ENCODE measurements at regions of chr9 and their contacts with region 1.

Region 1: GRCh38 chr9:99807276-99807852 is 14.3 kb upstream of the NR4A3 start:
- DNase-seq: peak; percentile 70
- H3K4me3 ChIP-seq: no peak overlapping the region
- H3K27ac ChIP-seq: no peak overlapping the region
- H3K4me1 ChIP-seq: no peaks in the 10 kb centered on the region
- CTCF ChIP-seq: peak; percentile 95

Region 2: DNA sequence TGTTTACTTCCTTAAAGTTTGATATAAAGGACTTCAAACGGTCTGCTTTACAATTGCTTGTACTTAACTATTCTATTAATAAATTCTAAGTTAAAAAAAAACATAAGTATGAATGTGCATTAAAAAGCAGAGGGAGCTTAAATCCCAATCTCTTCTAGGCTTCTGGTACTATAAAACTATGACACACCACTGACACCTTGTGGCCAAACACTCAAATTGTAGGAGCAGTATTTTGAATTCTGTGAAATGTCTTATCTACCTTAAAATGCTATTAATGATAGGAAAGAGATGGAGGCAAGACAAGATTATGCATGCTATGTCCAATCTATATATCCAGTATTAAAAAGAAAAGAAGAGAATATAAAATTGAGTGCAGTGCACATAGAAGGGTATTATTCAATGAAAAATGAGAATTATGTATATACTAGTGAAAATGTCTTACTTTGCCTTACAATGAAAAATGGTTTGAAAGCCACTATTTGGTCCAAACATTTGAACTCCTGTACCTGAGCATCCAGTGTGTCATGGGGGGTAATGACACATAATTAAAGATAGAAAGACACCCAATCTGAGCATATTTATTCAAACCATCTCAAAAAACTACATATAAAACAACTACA is 203.8 kb after region 1 on chr9:
- CTCF ChIA-PET with region 1: no interaction called
- POLR2A ChIA-PET with region 1: no interaction called
- intact Hi-C with region 1: loop called (anchors 5 kb)
- DNase-seq: peak; percentile 61
- H3K4me3 ChIP-seq: no peak overlapping the region
- H3K27ac ChIP-seq: no peak overlapping the region
- H3K4me1 ChIP-seq: no peaks in the 10 kb centered on the region
- CTCF ChIP-seq: peak; percentile 89

Measured in OCI-LY7 (cell line).